Activated CD8-positive, alpha-beta T cell treated with anti-CD3 and anti-CD28 coated beads, Interleukin-2, amount 10 ng/mL, durations not matched to agents 7 days and 5 days (primary cell): ENCODE measurements at regions of chr14 and their contacts with region 1.

Region 1: GRCh38 chr14:70714055-70714621 is 72.4 kb downstream of the TTC9 start:
- DNase-seq: peak; percentile 67
- ATAC-seq: no peak
- H3K4me3 Mint-ChIP-seq: no peak overlapping the region
- H3K27ac Mint-ChIP-seq: no peak overlapping the region
- H3K4me1 Mint-ChIP-seq: peaks cover 9% of the 10 kb centered on the region
- H3K27me3 Mint-ChIP-seq: peaks cover 6% of the 10 kb centered on the region

Region 2: DNA sequence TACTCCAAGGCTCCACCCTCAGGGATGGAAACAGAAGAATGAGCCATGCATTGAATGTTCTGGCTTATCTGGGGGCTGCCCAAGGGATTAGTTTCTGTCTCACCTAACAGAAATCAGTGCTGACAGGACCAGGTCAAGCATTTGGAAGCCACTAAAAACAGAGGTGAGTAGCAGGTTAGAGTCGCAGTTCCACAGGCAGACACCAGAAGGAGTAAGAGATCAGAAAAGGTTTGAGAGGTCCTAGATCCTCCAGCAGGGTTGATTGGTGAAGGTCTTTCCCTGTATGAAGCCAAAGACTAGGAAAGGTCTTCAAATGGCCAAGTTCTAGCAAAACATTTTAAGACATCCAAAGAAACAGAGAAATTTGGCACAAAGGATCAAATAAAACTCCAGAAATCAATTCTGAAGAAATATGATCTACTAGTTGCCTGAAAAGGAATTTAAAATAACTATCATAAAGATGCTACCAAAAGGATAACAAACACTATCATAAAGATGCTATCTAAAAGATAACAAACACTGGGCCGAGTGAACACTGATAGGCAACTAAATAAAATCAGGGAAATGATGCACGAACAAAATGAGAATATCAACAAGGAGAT is 91.9 kb before region 1 on chr14:
- CTCF ChIA-PET with region 1: interaction called, 67 read pairs
- POLR2A ChIA-PET with region 1: no interaction called
- DNase-seq: peak; percentile 72
- ATAC-seq: peak; percentile 79
- H3K4me3 Mint-ChIP-seq: no peak overlapping the region
- H3K27ac Mint-ChIP-seq: no peak overlapping the region
- H3K4me1 Mint-ChIP-seq: no peaks in the 10 kb centered on the region
- H3K27me3 Mint-ChIP-seq: peaks cover 4% of the 10 kb centered on the region

Region 3: GRCh38 chr14:70655110-70655826 is 58.9 kb before region 1 on chr14:
- CTCF ChIA-PET with region 1: interaction called, 11 read pairs
- POLR2A ChIA-PET with region 1: no interaction called
- DNase-seq: peak; percentile 91
- ATAC-seq: peak; percentile 91
- H3K4me3 Mint-ChIP-seq: peak overlapping the region; percentile 80
- H3K27ac Mint-ChIP-seq: peak overlapping the region; percentile 99
- H3K4me1 Mint-ChIP-seq: peaks cover 84% of the 10 kb centered on the region
- H3K27me3 Mint-ChIP-seq: no peaks in the 10 kb centered on the region

Region 4: GRCh38 chr14:70809543-70810244 is 95.6 kb after region 1 on chr14:
- CTCF ChIA-PET with region 1: interaction called, 12 read pairs
- POLR2A ChIA-PET with region 1: no interaction called
- DNase-seq: peak; percentile 97
- ATAC-seq: peak; percentile 90
- H3K4me3 Mint-ChIP-seq: no peak overlapping the region
- H3K27ac Mint-ChIP-seq: no peak overlapping the region
- H3K4me1 Mint-ChIP-seq: peaks cover 15% of the 10 kb centered on the region
- H3K27me3 Mint-ChIP-seq: peaks cover 2% of the 10 kb centered on the region